ENCODE measurements at regions of chr13 and their contacts with region 1.

Region 1: DNA sequence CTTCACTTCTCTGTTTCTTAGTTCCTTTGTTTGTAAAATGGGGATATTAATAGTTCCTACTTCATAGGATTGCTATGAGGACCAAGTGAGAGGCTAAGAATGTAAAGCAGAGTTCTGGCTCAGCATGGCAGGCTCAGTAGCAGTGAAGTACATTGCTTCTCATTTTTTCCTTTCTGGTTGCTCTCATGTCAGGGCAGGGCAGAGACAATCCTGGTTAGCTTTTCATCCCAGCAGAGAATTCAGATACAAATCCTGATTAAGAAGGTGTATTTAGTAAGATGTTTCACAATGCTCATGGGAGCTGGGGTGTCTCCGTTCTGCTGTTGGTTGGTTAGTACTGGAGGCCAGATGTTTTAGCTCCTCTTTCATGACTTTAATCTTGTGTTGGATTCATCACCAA is 42.9 kb downstream of the WASF3 start:
- DNase-seq: no peak
- ATAC-seq: no peak
- H3K4me3 ChIP-seq: no peak overlapping the region
- H3K27ac ChIP-seq: no peak overlapping the region
- H3K4me1 ChIP-seq: no peaks in the 10 kb centered on the region
- H3K27me3 ChIP-seq: no peaks in the 10 kb centered on the region
- CTCF ChIP-seq: no peak

Region 2: GRCh38 chr13:26563713-26564112 is 36.6 kb before region 1 on chr13:
- CTCF ChIA-PET with region 1: no interaction called
- POLR2A ChIA-PET with region 1: interaction called, 10 read pairs
- in situ Hi-C with region 1: no loop called
- intact Hi-C with region 1: no loop called
- DNase-seq: no peak
- ATAC-seq: no peak
- H3K4me3 ChIP-seq: no peak overlapping the region
- H3K27ac ChIP-seq: no peak overlapping the region
- H3K4me1 ChIP-seq: peaks cover 15% of the 10 kb centered on the region
- H3K27me3 ChIP-seq: no peaks in the 10 kb centered on the region
- CTCF ChIP-seq: no peak

Region 3: DNA sequence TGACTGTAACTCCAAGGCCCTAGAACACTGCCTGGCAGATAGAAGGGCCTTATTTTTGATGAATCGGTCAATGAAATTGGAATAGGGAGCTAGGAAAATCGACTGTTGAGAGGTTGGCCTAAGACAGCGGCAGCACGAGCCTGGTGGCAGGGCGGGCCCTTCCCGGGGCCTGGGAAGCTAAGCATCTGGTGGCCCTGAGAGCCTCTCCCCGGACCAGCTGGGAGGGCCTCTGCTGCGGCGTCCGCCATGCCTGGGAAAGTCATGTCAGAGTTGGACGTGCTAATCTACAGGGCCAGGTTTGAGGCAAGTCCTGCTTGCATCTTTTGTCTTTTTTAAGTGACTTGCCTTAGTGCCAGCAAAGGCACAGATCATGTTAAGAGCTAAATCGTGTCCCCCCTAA is 171.5 kb after region 1 on chr13:
- CTCF ChIA-PET with region 1: no interaction called
- POLR2A ChIA-PET with region 1: no interaction called
- in situ Hi-C with region 1: no loop called
- intact Hi-C with region 1: no loop called
- DNase-seq: no peak
- ATAC-seq: no peak
- H3K4me3 ChIP-seq: no peak overlapping the region
- H3K27ac ChIP-seq: no peak overlapping the region
- H3K4me1 ChIP-seq: no peaks in the 10 kb centered on the region
- H3K27me3 ChIP-seq: no peaks in the 10 kb centered on the region
- CTCF ChIP-seq: no peak